Activated CD4-positive, alpha-beta T cell treated with anti-CD3 and anti-CD28 coated beads for 36 hours (primary cell): ENCODE measurements at regions of chr18 and their contacts with region 1.

Region 1: GRCh38 chr18:45197526-45197970 is 417.7 kb upstream of the SLC14A2 start:
- DNase-seq: peak; percentile 47
- ATAC-seq: peak; percentile 95
- H3K4me3 Mint-ChIP-seq: no peak overlapping the region
- H3K27ac Mint-ChIP-seq: no peak overlapping the region
- H3K4me1 Mint-ChIP-seq: peaks cover 3% of the 10 kb centered on the region
- H3K27me3 Mint-ChIP-seq: peaks cover 14% of the 10 kb centered on the region

Region 2: DNA sequence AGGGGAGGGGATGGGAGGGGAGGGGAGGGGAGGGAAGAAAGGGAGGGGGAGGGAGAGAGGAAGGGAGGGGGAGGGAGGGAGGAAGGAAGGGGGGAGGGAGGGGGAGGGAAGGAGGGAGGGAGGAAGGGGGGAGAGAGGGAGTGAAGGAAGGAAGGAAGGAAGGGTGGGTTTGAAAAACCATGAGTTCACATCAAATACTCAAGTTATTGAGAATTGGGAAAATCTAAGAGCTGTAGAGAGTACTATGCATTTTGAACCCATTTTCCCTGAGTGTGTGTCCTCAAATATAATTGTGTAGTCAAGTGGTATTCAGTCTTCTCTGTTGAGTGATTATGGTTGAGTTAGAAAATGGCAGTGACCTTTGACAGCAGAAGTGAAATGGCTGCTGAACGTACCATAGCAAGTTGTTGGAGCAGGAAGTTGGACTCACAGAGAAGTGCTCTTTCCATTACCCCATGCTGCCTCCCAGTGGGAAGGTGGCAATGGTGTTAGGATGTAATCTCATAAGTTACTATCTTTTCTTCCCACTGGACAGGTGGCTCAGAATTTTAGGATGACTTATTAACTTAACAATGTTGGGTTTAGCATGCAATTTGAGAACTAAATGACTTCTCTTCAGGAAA is 302.3 kb before region 1 on chr18:
- CTCF ChIA-PET with region 1: no interaction called
- POLR2A ChIA-PET with region 1: no interaction called
- intact Hi-C with region 1: loop called in 1 of 2 experiments (anchors 5 kb)
- DNase-seq: peak; percentile 62
- ATAC-seq: peak; percentile 45
- H3K4me3 Mint-ChIP-seq: no peak overlapping the region
- H3K27ac Mint-ChIP-seq: peak overlapping the region; percentile 27
- H3K4me1 Mint-ChIP-seq: peaks cover 51% of the 10 kb centered on the region
- H3K27me3 Mint-ChIP-seq: peaks cover 2% of the 10 kb centered on the region

Region 3: GRCh38 chr18:45335282-45336043 is 137.9 kb after region 1 on chr18:
- CTCF ChIA-PET with region 1: no interaction called
- POLR2A ChIA-PET with region 1: no interaction called
- intact Hi-C with region 1: no loop called
- DNase-seq: no peak
- ATAC-seq: no peak
- H3K4me3 Mint-ChIP-seq: no peak overlapping the region
- H3K27ac Mint-ChIP-seq: no peak overlapping the region
- H3K4me1 Mint-ChIP-seq: no peaks in the 10 kb centered on the region
- H3K27me3 Mint-ChIP-seq: peaks cover 6% of the 10 kb centered on the region